ENCODE measurements at regions of chr15 and their contacts with region 1.

Region 1: DNA sequence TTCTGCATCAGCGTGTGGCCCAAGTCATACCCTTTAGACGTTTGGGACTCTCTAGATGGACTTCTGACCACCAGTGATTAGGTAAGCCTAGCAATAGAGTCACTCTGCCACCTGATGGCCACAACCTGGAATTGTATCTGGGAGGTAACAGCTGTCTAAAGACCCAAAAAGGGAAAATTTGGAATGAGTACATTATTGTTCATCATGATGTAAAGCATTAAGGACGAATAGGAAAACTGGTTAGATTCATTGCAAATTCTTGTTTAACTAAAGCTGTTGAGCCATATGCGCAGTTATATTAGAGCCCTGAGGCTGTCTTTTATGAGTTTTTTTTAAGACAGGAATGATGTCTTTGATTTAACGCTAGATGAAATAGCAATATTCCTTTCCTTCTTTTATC is 63.6 kb downstream of the FAM81A start:
- DNase-seq: peak; percentile 9 to 63
- H3K4me3 ChIP-seq: no peak overlapping the region
- H3K27ac ChIP-seq: no peak overlapping the region
- H3K4me1 ChIP-seq: no peaks in the 10 kb centered on the region
- H3K27me3 ChIP-seq: no peaks in the 10 kb centered on the region
- CTCF ChIP-seq: peak in 2 of 3 experiments; percentile 90; a peak in 3 of 4 replicates
- EP300 ChIP-seq: no peak
- POLR2A ChIP-seq: no peak
- RAD21 ChIP-seq: peak; percentile 95 to 98

Region 2: DNA sequence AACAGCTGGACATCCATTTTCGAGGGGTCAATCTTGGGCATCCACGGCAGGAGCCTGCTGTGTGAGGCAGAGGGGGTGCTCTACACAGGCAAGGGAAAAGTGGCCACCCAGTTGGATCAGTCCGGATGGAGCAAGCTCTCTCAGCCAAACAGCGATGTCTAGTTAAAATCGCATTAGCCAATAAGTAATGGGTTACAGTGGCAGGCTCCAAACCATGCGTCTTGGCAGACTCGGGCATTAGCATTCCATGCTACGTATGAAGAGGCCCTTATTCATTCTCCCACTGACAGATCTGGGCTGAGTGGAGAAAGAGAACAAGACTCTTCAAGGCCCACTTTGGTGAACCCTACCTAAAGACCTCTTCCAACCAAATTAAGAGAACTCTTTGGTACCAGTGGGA is 347.4 kb before region 1 on chr15:
- CTCF ChIA-PET with region 1: interaction called, 20 read pairs
- POLR2A ChIA-PET with region 1: no interaction called
- DNase-seq: no peak
- H3K4me3 ChIP-seq: no peak overlapping the region
- H3K27ac ChIP-seq: no peak overlapping the region
- H3K4me1 ChIP-seq: no peaks in the 10 kb centered on the region
- H3K27me3 ChIP-seq: no peaks in the 10 kb centered on the region
- CTCF ChIP-seq: no peak
- EP300 ChIP-seq: no peak
- POLR2A ChIP-seq: no peak
- RAD21 ChIP-seq: no peak

Region 3: GRCh38 chr15:59160880-59161593 is 340.6 kb before region 1 on chr15:
- CTCF ChIA-PET with region 1: interaction called, 20 read pairs
- POLR2A ChIA-PET with region 1: no interaction called
- DNase-seq: peak in 1 of 2 experiments; percentile 73
- H3K4me3 ChIP-seq: no peak overlapping the region
- H3K27ac ChIP-seq: no peak overlapping the region
- H3K4me1 ChIP-seq: no peaks in the 10 kb centered on the region; a peak in 2 of 7 replicates
- H3K27me3 ChIP-seq: no peaks in the 10 kb centered on the region
- CTCF ChIP-seq: peak; percentile 78 to 82 (median 80)
- EP300 ChIP-seq: no peak
- POLR2A ChIP-seq: no peak
- RAD21 ChIP-seq: peak; percentile 84 to 88

Region 4: DNA sequence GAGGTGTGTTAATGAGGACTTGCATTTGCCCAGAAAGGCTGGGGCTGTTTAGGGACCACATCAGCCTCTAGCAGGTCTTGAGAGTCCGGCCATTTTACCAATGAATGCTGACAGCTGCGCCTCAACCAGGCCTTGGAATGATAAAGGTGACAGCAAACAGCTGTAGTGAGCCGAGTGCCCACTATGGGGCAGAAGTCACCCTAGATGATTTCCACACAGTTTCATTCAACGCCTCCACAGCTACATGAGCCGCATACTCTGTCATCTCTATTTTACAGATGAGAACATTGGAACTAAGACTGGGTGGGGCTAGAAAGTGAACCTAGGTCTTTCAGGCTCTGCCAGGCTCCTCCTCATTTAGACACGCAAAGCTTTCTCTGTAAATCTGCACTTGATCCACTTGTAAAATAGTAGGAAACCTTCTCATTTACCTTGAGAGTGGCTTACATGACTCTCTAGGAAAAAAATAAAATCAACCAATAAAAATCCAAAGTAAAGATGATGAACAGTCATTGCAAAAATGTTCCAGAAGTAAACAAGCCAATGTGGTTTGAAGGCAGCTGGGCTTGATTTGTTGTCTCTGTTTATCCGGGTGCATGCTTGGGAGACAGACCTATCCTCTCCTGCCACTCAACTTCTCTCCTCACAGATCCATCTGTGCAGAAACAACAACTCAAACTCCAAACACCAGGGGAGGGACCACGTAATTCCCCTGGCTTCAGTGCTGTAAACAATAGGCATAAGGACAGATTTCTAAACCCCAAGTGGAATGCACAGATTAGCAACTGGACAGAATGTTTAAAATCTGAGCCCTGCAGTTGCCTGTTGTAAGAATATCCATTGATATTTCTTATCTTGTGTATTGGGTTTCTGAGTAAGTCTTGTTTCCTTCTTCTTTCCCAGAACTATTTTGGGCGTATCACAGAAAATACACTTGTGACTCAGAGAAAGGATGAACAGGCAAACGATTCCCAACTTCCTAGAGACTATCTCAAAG is 326.5 kb before region 1 on chr15:
- CTCF ChIA-PET with region 1: interaction called, 15 read pairs
- POLR2A ChIA-PET with region 1: no interaction called
- DNase-seq: peak; percentile 17 to 63
- H3K4me3 ChIP-seq: no peak overlapping the region
- H3K27ac ChIP-seq: no peak overlapping the region
- H3K4me1 ChIP-seq: no peaks in the 10 kb centered on the region
- H3K27me3 ChIP-seq: no peaks in the 10 kb centered on the region
- CTCF ChIP-seq: peak; percentile 62 to 78 (median 65)
- EP300 ChIP-seq: no peak
- POLR2A ChIP-seq: 0 out of 3 replicates have a peak, but pooled peaks of 1 of the 2 experiments have one; percentile 16
- RAD21 ChIP-seq: peak; percentile 70 to 72

Region 5: DNA sequence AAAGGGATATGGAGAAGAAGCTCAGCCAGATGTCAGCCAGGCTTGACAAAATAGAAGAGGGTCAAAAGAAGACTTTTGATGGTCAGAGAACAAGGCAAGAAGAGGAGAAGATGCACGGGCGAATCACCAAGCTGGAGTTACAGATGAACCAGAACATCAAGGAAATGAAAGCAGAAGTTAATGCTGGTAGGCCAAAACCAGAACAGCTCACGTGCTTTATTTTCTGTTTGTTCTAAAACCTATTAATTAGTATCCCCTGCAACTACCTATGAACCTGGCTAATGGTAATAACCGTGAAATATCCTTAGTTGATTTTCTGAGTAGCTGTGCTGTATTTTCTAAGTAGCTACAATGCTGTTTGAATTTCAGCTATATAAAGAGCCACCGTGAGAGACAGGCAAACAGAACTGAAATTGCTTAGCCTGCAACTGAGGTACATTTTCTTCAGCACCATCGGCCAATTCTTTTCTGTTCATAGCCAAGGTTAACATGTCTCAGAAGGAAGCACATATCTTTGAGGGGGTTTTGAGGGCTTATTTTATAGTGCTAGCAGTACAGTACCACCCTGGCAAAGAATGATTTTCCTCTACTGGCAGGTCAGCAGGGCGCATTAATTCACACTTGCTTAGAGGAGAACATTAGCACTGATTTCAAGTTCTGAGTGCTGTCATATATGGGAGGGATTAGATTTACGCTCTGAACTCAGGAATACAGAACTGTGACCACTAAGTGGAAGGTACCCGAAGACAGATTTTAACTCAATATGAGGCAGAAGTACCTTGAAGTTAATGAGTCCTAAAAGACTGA is 15.3 kb after region 1 on chr15:
- CTCF ChIA-PET with region 1: interaction called, 24 read pairs
- POLR2A ChIA-PET with region 1: no interaction called
- DNase-seq: no peak
- H3K4me3 ChIP-seq: no peak overlapping the region
- H3K27ac ChIP-seq: no peak overlapping the region
- H3K4me1 ChIP-seq: no peaks in the 10 kb centered on the region
- H3K27me3 ChIP-seq: no peaks in the 10 kb centered on the region
- CTCF ChIP-seq: no peak
- EP300 ChIP-seq: no peak
- POLR2A ChIP-seq: no peak
- RAD21 ChIP-seq: no peak